SK-N-SH (cell line): ENCODE measurements at regions of chr6 and their contacts with region 1.

Region 1: DNA sequence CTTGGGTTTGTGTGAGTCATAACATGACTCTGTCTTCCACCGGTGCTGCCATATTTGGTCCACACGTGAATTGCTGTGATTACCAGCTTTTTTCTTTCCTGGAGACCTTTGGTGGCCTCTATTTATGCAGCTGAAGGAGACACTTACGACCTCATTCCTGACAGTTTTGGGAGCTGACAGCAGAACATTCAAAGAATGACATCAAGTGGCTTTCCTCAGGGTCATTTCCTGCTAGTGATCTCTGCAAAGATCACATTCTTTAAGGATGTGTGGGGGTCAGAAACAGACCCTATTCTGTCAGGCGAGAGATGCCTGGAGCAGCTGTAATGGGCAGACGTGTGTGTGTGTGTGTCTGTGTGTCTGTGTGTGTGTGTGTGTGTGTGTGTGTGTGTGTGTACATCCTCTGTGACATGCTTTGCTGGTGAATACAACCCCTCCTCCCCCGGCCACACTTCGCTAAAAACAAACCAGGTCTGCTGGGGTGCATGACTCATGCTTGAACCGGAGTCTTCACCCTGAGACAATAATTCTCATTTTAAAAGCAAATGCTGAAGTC is 115.6 kb downstream of the TMEM170B start:
- DNase-seq: no peak
- H3K4me3 ChIP-seq: no peak overlapping the region
- H3K27ac ChIP-seq: peak overlapping the region in 1 of 2 experiments; percentile 67; a peak in 2 of 4 replicates
- H3K4me1 ChIP-seq: peaks cover 2 to 35% of the 10 kb centered on the region in 2 experiments; a peak in 3 of 4 replicates
- H3K27me3 ChIP-seq: no peaks in the 10 kb centered on the region
- CTCF ChIP-seq: no peak
- EP300 ChIP-seq: peak in 1 of 2 experiments; percentile 55; a peak in 1 of 4 replicates
- RAD21 ChIP-seq: no peak

Region 2: GRCh38 chr6:11552442-11552841 is 100.7 kb before region 1 on chr6:
- CTCF ChIA-PET with region 1: no interaction called
- POLR2A ChIA-PET with region 1: no interaction called
- DNase-seq: no peak
- H3K4me3 ChIP-seq: no peak overlapping the region
- H3K27ac ChIP-seq: no peak overlapping the region
- H3K4me1 ChIP-seq: peaks cover 0 to 6% of the 10 kb centered on the region in 2 experiments; a peak in 1 of 4 replicates
- H3K27me3 ChIP-seq: no peaks in the 10 kb centered on the region
- CTCF ChIP-seq: no peak
- EP300 ChIP-seq: no peak
- RAD21 ChIP-seq: no peak

Region 3: DNA sequence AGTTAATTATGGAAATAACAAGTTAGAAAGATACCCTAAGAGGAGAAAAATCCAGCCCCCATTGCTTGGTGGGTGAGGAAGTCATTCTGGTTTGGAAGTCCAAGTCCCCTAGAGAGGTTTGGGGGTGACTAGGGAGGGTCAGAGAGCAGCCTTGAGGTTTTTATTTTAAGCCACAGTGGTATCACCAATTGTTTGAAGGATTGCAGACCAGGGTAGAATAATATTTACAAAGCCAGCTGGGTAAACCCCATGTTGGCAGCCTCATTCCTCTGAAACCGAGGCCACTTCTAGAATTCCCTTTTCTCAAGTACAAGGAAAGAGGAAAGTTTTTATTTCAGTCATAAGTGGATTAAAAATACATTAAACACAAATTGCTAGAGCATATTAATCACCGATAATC is 15.8 kb before region 1 on chr6:
- CTCF ChIA-PET with region 1: interaction called, 46 read pairs
- POLR2A ChIA-PET with region 1: no interaction called
- DNase-seq: no peak
- H3K4me3 ChIP-seq: no peak overlapping the region
- H3K27ac ChIP-seq: no peak overlapping the region
- H3K4me1 ChIP-seq: no peaks in the 10 kb centered on the region
- H3K27me3 ChIP-seq: no peaks in the 10 kb centered on the region
- CTCF ChIP-seq: no peak
- EP300 ChIP-seq: no peak
- RAD21 ChIP-seq: no peak

Region 4: DNA sequence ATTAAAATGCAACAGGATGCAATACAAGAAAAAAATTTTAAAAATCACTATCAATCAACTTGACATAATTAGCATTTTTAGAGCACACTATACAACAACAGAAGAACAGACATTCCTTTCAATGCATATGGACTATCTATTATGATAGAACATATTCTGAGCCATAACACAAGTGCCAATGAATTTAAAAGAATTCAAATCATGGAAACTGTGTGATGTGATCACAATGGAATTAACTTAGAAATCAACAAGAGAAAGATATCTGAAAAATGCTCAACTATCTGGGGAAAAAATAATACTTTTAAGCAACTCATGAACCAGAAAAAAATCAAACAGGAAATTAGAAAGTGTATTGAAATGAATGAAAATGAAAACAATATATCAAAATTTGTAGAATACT is 19.1 kb after region 1 on chr6:
- CTCF ChIA-PET with region 1: interaction called, 43 read pairs
- POLR2A ChIA-PET with region 1: no interaction called
- DNase-seq: no peak
- H3K4me3 ChIP-seq: no peak overlapping the region
- H3K27ac ChIP-seq: no peak overlapping the region
- H3K4me1 ChIP-seq: no peaks in the 10 kb centered on the region; a peak in 1 of 4 replicates
- H3K27me3 ChIP-seq: no peaks in the 10 kb centered on the region
- CTCF ChIP-seq: no peak
- EP300 ChIP-seq: 0 out of 4 replicates have a peak, but pooled peaks of 1 of the 2 experiments have one; percentile 22
- RAD21 ChIP-seq: no peak

Region 5: GRCh38 chr6:12233693-12234571 is 580.8 kb after region 1 on chr6:
- CTCF ChIA-PET with region 1: interaction called, 78 read pairs
- POLR2A ChIA-PET with region 1: no interaction called
- DNase-seq: peak; percentile 52
- H3K4me3 ChIP-seq: no peak overlapping the region
- H3K27ac ChIP-seq: no peak overlapping the region
- H3K4me1 ChIP-seq: peaks cover 3 to 4% of the 10 kb centered on the region in 2 experiments; a peak in 1 of 4 replicates
- H3K27me3 ChIP-seq: no peaks in the 10 kb centered on the region
- CTCF ChIP-seq: peak; percentile 89
- EP300 ChIP-seq: no peak
- RAD21 ChIP-seq: peak; percentile 92

Region 6: DNA sequence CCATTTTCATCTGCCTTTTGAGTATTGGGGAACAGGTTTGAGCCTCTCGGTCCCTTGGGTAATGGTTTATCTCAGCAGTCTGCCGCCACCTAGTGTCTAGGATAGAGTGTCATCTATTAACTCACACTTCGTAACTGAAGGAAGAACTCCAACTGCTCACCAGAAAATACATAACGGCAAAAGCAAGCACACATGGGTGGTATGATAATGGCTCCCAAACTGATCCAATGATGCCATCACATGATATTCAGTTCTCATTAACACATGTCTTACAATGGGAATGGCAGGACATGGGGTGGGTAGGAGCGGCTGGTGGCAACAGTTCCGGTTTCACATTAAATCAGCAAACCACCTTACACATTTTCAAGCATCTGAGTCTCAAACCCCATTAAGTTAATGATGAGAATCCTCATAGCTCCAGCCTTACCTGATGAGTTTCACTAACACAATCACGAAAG is 952.8 kb after region 1 on chr6:
- CTCF ChIA-PET with region 1: interaction called, 92 read pairs
- POLR2A ChIA-PET with region 1: no interaction called
- DNase-seq: peak; percentile 57
- H3K4me3 ChIP-seq: no peak overlapping the region
- H3K27ac ChIP-seq: no peak overlapping the region
- H3K4me1 ChIP-seq: peaks cover 2 to 12% of the 10 kb centered on the region in 2 experiments; a peak in 2 of 4 replicates
- H3K27me3 ChIP-seq: no peaks in the 10 kb centered on the region
- CTCF ChIP-seq: peak; percentile 81
- EP300 ChIP-seq: no peak
- RAD21 ChIP-seq: peak; percentile 87